PC-9 (cell line): ENCODE measurements at regions of chr5 and their contacts with region 1.

Region 1: DNA sequence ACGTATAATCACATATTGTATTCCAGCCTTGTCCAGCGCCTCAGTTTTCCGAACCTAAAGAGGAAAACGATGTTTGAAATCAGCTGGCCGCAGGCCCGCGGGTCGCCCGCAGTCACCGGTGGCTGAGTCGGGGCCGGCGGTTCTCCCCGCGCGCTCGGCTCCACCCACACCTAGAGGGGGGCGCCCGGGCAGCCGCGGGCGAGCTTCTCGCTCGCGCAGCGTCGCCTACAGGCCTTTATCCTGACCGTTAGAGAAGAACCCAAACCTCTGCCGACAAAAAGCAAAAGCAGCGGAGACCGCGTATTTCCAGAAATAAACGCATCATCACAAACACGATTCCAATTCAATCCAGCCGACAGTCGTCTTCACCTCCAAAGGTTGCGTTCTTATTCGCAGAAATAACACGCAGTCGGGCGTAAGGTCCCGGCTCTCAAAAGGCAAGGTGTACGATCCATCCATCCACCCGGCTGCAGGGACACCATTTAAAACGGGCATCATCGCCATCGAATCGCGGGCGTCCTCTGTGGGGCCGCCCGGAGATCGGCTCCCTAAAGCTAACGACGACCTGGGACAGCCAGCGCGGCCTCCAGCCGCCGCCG is 680 bp upstream of the NIPBL start:
- DNase-seq: peak; percentile 75 to 92
- H3K4me3 ChIP-seq: peak overlapping the region; percentile 81
- H3K27ac ChIP-seq: peak overlapping the region; percentile 55
- H3K4me1 ChIP-seq: peaks cover 53% of the 10 kb centered on the region
- H3K27me3 ChIP-seq: no peaks in the 10 kb centered on the region
- CTCF ChIP-seq: peak; percentile 58; the same call in 1 of the 2 replicates

Region 2: GRCh38 chr5:36241631-36242533 is 634.0 kb before region 1 on chr5 and contains the start of gene NADK2:
- CTCF ChIA-PET with region 1: no interaction called
- POLR2A ChIA-PET with region 1: no interaction called
- intact Hi-C with region 1: loop called (anchors 2 kb)
- DNase-seq: peak; percentile 93 to 99
- H3K4me3 ChIP-seq: peak within 1 kb of the TSS; percentile 93
- H3K27ac ChIP-seq: peak within 1 kb of the TSS; percentile 81
- H3K4me1 ChIP-seq: peaks cover 39% of the 10 kb centered on the region
- H3K27me3 ChIP-seq: no peaks in the 10 kb centered on the region
- CTCF ChIP-seq: peak; percentile 71
- total RNA-seq, gene NADK2: 43.7 and 55.7 TPM in 2 replicates

Region 3: DNA sequence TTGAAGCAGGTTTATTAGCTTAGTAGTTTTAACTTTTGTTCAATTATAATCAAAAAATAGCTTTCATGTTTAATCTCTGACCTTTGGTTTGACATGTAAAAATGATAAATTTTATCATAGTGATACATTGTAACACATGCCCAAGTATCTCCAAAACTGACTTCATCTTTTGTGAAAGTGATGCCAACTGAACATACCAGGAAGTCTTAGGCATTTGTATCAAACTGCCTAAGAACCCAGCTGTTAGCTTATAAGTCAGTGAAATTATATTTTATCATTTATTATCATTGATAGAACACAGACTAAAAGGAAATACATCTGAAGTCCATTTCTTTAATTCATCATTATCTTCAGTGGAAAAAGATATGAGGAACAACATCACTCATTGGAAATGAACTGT is 39.8 kb after region 1 on chr5:
- CTCF ChIA-PET with region 1: interaction called, 12 read pairs
- POLR2A ChIA-PET with region 1: no interaction called
- intact Hi-C with region 1: no loop called
- DNase-seq: no peak
- H3K4me3 ChIP-seq: no peak overlapping the region
- H3K27ac ChIP-seq: no peak overlapping the region
- H3K4me1 ChIP-seq: 0 out of 2 replicates have a peak, but pooled peaks cover 6% of the 10 kb centered on the region
- H3K27me3 ChIP-seq: no peaks in the 10 kb centered on the region
- CTCF ChIP-seq: no peak

Region 4: GRCh38 chr5:37005946-37006540 is 130.2 kb after region 1 on chr5:
- CTCF ChIA-PET with region 1: no interaction called
- POLR2A ChIA-PET with region 1: no interaction called
- intact Hi-C with region 1: loop called (anchors 2 kb)
- DNase-seq: peak in 1 of 2 experiments; percentile 53
- H3K4me3 ChIP-seq: no peak overlapping the region
- H3K27ac ChIP-seq: no peak overlapping the region
- H3K4me1 ChIP-seq: no peaks in the 10 kb centered on the region
- H3K27me3 ChIP-seq: no peaks in the 10 kb centered on the region
- CTCF ChIP-seq: peak; percentile 77

Region 5: GRCh38 chr5:37184748-37185364 is 309.0 kb after region 1 on chr5:
- CTCF ChIA-PET with region 1: no interaction called
- POLR2A ChIA-PET with region 1: no interaction called
- intact Hi-C with region 1: no loop called
- DNase-seq: no peak
- H3K4me3 ChIP-seq: no peak overlapping the region
- H3K27ac ChIP-seq: no peak overlapping the region
- H3K4me1 ChIP-seq: no peaks in the 10 kb centered on the region
- H3K27me3 ChIP-seq: no peaks in the 10 kb centered on the region
- CTCF ChIP-seq: no peak